Endothelial cell of umbilical vein (primary cell): ENCODE measurements at regions of chr7 and their contacts with region 1.

Region 1: DNA sequence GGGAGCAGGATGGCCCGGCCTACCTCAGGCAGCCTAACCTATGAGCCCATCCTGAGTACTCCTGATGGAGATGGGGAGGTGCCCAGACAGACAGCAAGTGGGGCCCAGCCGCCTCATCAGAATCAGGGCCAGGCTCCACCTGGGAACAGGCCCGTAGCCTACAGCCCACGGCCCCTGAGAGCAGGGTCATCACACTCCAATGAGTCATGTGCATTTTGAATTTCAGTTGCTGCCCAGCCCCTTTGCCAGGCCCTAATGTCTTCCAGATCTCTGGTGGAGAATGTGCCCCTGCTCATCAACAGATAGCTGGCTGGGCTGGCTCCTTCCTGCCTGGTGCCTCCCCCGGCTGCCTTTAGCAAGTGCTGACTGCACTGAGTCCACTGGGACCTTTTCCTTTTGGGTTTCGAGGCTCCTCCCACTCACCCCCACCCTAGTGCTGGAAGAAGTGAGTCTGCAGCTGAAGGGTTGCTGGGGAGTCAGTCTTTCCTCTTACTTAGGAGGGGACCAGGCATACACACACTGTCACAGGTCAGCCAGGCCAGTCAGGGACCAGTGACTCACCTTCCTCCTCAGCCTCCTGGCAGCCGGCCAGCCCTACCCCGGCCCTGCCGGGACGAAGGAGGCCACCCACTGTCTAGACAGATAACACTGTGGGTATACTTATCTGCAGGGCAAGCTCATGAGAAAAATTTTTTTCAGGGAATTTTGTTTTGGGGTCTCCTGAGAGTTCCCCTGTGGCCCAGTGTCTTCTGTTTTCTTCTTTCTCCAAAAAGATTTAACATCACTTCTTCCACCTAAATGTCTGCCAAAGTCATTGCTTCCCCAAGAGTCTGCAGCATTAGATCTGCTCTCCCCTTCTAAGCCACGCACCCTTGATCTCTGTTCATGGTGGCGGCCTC is 9.1 kb upstream of the ASIC3 start:
- DNase-seq: peak; percentile 97
- H3K4me3 ChIP-seq: no peak overlapping the region
- H3K27ac ChIP-seq: peak overlapping the region; percentile 85
- H3K4me1 ChIP-seq: peaks cover 20% of the 10 kb centered on the region
- H3K27me3 ChIP-seq: no peaks in the 10 kb centered on the region
- CTCF ChIP-seq: no peak
- POLR2A ChIP-seq: peak; percentile 15

Region 2: DNA sequence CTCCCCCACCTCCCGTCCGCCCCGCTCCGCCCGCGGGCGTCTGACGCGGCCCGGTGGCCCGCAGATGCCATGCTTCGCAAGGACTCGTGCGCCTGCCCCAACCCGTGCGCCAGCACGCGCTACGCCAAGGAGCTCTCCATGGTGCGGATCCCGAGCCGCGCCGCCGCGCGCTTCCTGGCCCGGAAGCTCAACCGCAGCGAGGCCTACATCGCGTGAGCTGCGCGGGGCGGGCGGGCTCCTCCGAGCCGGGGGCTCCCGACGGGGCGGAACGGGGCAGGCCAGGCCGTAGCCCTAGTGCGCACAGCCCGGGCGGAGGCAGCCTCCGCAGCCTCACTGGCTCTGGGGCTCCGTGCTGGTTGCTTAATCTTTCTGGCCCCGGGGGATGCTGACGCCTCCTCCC is 11.9 kb after region 1 on chr7:
- CTCF ChIA-PET with region 1: interaction called, 6 read pairs
- POLR2A ChIA-PET with region 1: interaction called, 3 read pairs
- dilution Hi-C with region 1: no loop called
- intact Hi-C with region 1: loop called (anchors 1 kb)
- DNase-seq: peak; percentile 79
- H3K4me3 ChIP-seq: no peak overlapping the region
- H3K27ac ChIP-seq: no peak overlapping the region
- H3K4me1 ChIP-seq: no peaks in the 10 kb centered on the region
- H3K27me3 ChIP-seq: peaks cover 0 to 4% of the 10 kb centered on the region in 2 experiments
- CTCF ChIP-seq: no peak
- POLR2A ChIP-seq: no peak

Region 3: DNA sequence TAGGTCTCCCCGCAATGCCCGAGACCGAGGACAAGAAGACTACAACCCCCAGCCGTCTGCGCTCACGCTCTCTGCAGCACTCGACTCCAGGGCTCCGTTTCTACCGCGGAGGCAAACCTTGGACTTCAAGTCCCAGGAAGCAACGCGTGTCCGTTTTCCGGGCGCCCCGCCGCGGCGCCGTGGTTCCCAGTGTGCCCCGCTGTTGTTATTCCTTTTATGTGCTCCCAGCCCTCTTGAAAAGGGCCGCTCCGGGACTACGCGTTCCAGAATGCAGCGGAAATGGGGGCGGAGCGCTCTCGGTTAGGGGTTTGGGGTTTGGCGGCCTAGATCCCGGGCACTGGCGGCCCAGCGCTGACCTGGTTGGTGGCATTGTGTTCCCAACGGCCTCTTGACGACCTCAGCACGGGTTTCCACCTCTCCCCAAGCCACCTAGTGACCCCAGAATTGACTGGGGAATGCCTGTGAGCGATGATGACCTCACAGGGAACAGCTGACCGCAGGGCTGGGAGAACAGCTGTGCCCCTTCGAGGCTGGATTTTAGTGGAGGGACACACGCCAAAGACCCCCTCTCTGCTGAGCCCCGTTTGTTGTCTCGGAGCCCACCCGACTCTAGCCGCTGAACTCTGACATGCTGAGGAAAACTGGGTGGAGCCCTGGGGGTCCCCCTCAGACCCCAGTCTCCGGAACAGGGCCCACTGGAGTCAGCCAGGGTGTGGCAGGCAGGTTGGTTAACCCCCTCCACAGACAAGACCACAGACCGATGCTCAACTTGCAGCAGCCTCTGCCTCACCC is 19.0 kb after region 1 on chr7:
- CTCF ChIA-PET with region 1: no interaction called
- POLR2A ChIA-PET with region 1: interaction called, 4 read pairs
- dilution Hi-C with region 1: no loop called
- intact Hi-C with region 1: loop called (anchors 1 kb)
- DNase-seq: peak; percentile 100
- H3K4me3 ChIP-seq: peak overlapping the region in 2 of 3 experiments; percentile 11 to 69
- H3K27ac ChIP-seq: peak overlapping the region; percentile 81
- H3K4me1 ChIP-seq: peaks cover 29% of the 10 kb centered on the region
- H3K27me3 ChIP-seq: no peaks in the 10 kb centered on the region
- CTCF ChIP-seq: no peak
- POLR2A ChIP-seq: peak; percentile 52

Region 4: GRCh38 chr7:151104411-151105235 is 65.4 kb after region 1 on chr7:
- CTCF ChIA-PET with region 1: no interaction called
- POLR2A ChIA-PET with region 1: no interaction called
- dilution Hi-C with region 1: no loop called
- intact Hi-C with region 1: no loop called
- DNase-seq: peak; percentile 85
- H3K4me3 ChIP-seq: no peak overlapping the region
- H3K27ac ChIP-seq: no peak overlapping the region
- H3K4me1 ChIP-seq: peaks cover 17% of the 10 kb centered on the region
- H3K27me3 ChIP-seq: no peaks in the 10 kb centered on the region
- CTCF ChIP-seq: no peak
- POLR2A ChIP-seq: no peak